ENCODE measurements at regions of chr15 and their contacts with region 1.

Region 1: GRCh38 chr15:73081321-73081958 is 29.2 kb downstream of the NEO1 start:
- DNase-seq: peak; percentile 51
- H3K4me3 ChIP-seq: no peak overlapping the region
- H3K27ac ChIP-seq: no peak overlapping the region
- H3K4me1 ChIP-seq: no peaks in the 10 kb centered on the region
- CTCF ChIP-seq: peak; percentile 83

Region 2: GRCh38 chr15:72319985-72320671 is 761.3 kb before region 1 on chr15 and contains the start of gene CELF6:
- CTCF ChIA-PET with region 1: no interaction called
- POLR2A ChIA-PET with region 1: no interaction called
- intact Hi-C with region 1: loop called (anchors 10 kb)
- DNase-seq: no peak
- H3K4me3 ChIP-seq: peak within 1 kb of the TSS; percentile 9
- H3K27ac ChIP-seq: no peak within 1 kb of the TSS
- H3K4me1 ChIP-seq: no peaks in the 10 kb centered on the region
- CTCF ChIP-seq: no peak
- total RNA-seq, gene CELF6: 0.62 and 0.79 TPM in 2 replicates

Region 3: GRCh38 chr15:72599855-72600464 is 481.5 kb before region 1 on chr15:
- CTCF ChIA-PET with region 1: no interaction called
- POLR2A ChIA-PET with region 1: no interaction called
- intact Hi-C with region 1: loop called (anchors 10 kb)
- DNase-seq: peak; percentile 54
- H3K4me3 ChIP-seq: no peak overlapping the region
- H3K27ac ChIP-seq: no peak overlapping the region
- H3K4me1 ChIP-seq: no peaks in the 10 kb centered on the region
- CTCF ChIP-seq: peak; percentile 92

Region 4: DNA sequence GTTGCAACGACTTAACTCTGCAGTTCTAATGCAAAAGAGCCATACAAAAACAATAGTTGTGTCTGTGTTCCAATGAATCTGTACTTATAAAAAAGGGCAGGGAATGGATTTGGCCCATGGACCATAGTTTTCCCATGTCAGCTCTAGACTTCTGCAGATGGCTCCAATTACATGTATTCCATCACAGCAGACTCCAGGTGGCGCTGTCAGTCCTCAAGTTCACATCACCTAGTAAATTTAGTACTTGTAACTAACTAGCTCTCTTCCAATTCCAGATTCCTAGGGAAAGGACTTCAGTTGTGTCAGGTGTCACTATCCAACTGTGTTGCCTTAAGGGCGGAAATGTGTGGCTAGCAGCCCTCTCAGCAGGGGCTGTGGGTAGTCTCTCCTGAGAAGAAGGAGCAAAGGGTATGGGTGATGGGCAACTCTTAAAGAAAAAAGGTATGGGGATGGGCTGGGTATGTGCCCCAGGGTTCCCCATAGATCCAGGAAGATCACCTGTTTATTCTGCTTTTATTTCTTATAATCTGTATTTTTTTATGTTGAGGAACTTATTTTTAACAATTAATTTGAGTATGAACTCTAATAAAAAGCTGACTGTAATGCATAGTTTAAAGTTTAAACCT is 359.3 kb before region 1 on chr15:
- CTCF ChIA-PET with region 1: no interaction called
- POLR2A ChIA-PET with region 1: interaction called, 3 read pairs
- intact Hi-C with region 1: loop called (anchors 5 kb)
- DNase-seq: peak; percentile 69
- H3K4me3 ChIP-seq: no peak overlapping the region
- H3K27ac ChIP-seq: no peak overlapping the region
- H3K4me1 ChIP-seq: no peaks in the 10 kb centered on the region
- CTCF ChIP-seq: peak; percentile 96

Region 5: DNA sequence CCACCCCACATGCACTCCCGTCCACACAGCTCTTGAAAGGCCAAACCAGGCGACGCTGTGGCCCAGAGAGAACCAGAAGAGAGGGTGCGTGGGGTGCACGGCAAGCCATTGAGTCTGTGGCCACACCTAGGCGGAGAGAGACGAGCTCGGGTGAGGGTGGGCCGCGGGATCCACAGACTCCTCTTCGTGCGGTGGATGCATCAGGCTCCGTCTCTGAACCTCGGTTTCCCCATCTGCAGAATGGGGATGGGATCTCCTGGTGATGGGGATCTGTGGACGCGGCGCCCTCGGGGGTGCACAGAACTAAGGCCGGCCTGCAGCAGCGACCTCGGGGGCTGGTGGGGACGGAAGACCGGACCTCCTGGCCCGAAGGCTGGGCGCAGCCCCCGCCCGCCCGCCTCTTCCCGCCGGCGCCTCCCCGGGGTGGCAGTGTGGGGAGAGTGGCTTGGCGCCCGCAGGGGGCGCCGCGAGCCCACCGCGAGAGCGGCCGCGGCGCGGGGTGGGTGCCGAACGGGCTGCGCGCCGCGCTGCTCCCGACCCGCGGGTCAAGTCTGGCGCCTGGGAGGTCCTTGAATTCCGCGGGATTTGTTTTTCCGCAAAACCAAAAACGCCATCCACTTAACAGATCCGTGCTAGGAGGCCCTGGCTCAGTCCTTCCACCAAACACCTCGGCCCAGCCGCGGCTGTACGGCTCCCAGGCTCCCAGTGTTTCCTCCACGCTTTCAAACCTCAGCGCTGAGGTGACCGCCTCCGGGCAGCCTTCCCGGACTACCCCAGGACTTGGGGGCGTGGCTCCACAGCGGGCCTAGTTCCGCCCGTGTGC is 284.7 kb before region 1 on chr15:
- CTCF ChIA-PET with region 1: no interaction called
- POLR2A ChIA-PET with region 1: no interaction called
- intact Hi-C with region 1: loop called (anchors 5 kb)
- DNase-seq: peak; percentile 40
- H3K4me3 ChIP-seq: peak overlapping the region; percentile 53
- H3K27ac ChIP-seq: no peak overlapping the region
- H3K4me1 ChIP-seq: peaks cover 10% of the 10 kb centered on the region
- CTCF ChIP-seq: peak; percentile 79